ENCODE measurements at regions of chr15 and their contacts with region 1.

Region 1: GRCh38 chr15:81265944-81266775 is 57.8 kb downstream of the STARD5 start:
- DNase-seq: peak; percentile 82 to 90
- ATAC-seq: peak; percentile 92 to 98
- H3K4me3 ChIP-seq: no peak overlapping the region
- H3K27ac ChIP-seq: no peak overlapping the region
- H3K4me1 ChIP-seq: peaks cover 4% of the 10 kb centered on the region; the same call in 2 of the 3 replicates
- CTCF ChIP-seq: peak; percentile 79
- EP300 ChIP-seq: no peak
- POLR2A ChIP-seq: no peak
- RAD21 ChIP-seq: peak; percentile 87 to 96

Region 2: DNA sequence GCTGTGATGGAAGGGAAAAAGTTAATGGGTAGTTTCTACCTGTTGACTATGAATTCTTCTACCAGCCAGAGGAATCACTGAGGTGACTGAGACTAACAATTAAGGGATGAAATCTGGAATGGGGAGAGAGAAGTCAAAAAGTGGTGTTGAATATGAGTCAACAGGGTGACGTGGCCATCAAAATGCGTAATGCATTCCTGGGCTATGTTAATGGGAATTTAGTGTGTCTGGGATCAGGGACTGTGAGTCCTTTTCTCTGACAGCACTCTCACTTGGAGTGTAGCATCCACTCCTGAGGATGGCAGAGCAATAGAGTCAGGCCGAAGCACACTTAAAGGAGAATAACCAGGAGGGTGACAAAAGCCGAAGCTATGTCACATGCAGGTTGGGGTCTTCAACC is 336.9 kb before region 1 on chr15:
- CTCF ChIA-PET with region 1: no interaction called
- POLR2A ChIA-PET with region 1: no interaction called
- DNase-seq: no peak
- ATAC-seq: no peak; a peak in 1 of 6 replicates
- H3K4me3 ChIP-seq: no peak overlapping the region
- H3K27ac ChIP-seq: no peak overlapping the region
- H3K4me1 ChIP-seq: no peaks in the 10 kb centered on the region
- CTCF ChIP-seq: no peak
- EP300 ChIP-seq: no peak
- POLR2A ChIP-seq: no peak
- RAD21 ChIP-seq: no peak

Region 3: GRCh38 chr15:81091889-81092558 is 174.1 kb before region 1 on chr15:
- CTCF ChIA-PET with region 1: interaction called, 13 read pairs
- POLR2A ChIA-PET with region 1: no interaction called
- DNase-seq: peak in 1 of 2 experiments; percentile 34
- ATAC-seq: peak; percentile 60 to 64
- H3K4me3 ChIP-seq: no peak overlapping the region
- H3K27ac ChIP-seq: no peak overlapping the region
- H3K4me1 ChIP-seq: no peaks in the 10 kb centered on the region; the same call in 2 of the 3 replicates
- CTCF ChIP-seq: no peak
- EP300 ChIP-seq: no peak
- POLR2A ChIP-seq: no peak
- RAD21 ChIP-seq: no peak

Region 4: DNA sequence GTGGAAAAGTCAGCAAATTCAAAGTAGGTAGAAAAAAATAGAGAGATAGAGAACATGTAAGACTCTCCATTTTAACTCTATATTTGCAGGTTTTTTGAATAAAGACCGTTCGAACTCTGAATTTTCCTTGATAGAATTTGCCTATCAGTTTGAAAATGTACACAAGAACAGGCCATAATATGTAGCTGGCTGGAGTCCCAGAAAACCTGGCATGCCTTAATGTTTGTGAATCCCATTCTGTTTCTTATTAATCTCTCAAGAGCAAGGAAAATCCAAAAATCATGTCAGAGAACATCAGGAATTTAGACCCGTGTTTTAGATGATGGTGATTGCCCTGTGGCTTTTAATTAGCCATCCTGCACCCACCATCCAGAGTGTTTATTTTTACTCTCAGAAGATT is 139.3 kb before region 1 on chr15:
- CTCF ChIA-PET with region 1: interaction called, 17 read pairs
- POLR2A ChIA-PET with region 1: no interaction called
- DNase-seq: no peak
- ATAC-seq: no peak
- H3K4me3 ChIP-seq: no peak overlapping the region
- H3K27ac ChIP-seq: no peak overlapping the region
- H3K4me1 ChIP-seq: no peaks in the 10 kb centered on the region
- CTCF ChIP-seq: no peak
- EP300 ChIP-seq: no peak
- POLR2A ChIP-seq: no peak
- RAD21 ChIP-seq: no peak

Region 5: DNA sequence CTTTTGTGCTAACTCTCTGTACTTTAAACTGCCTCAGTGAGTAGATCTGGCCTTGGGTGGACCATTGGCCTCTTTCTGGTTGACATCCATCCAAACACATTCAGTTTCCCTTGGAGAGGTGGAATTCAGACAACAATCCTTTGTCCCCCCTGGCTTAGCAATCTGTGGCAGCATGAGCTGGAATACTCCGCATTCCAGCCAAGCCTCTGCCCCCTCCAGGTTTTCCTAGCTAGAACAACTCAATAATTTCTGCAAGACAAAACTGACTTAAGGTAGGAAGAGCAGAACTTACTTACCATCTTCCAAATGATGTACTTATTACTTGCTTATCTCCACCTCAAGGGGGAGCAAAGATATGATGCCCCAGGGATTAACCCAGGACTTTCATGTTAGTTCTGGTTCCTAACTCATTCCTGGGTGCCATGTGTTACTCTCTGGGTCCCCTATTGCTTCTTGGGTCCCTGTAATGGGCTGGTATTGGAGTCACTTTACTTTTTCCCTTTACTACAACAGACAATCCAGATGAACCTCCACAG is 91.3 kb before region 1 on chr15:
- CTCF ChIA-PET with region 1: interaction called, 26 read pairs
- POLR2A ChIA-PET with region 1: no interaction called
- DNase-seq: no peak
- ATAC-seq: no peak
- H3K4me3 ChIP-seq: no peak overlapping the region
- H3K27ac ChIP-seq: no peak overlapping the region
- H3K4me1 ChIP-seq: no peaks in the 10 kb centered on the region
- CTCF ChIP-seq: no peak
- EP300 ChIP-seq: no peak
- POLR2A ChIP-seq: no peak
- RAD21 ChIP-seq: no peak

Region 6: GRCh38 chr15:81244306-81244705 is 21.9 kb before region 1 on chr15:
- CTCF ChIA-PET with region 1: interaction called, 20 read pairs
- POLR2A ChIA-PET with region 1: no interaction called
- DNase-seq: no peak
- ATAC-seq: no peak
- H3K4me3 ChIP-seq: no peak overlapping the region
- H3K27ac ChIP-seq: no peak overlapping the region
- H3K4me1 ChIP-seq: no peaks in the 10 kb centered on the region
- CTCF ChIP-seq: no peak
- EP300 ChIP-seq: no peak
- POLR2A ChIP-seq: no peak
- RAD21 ChIP-seq: no peak

Region 7: GRCh38 chr15:81308260-81308659 is 42.1 kb after region 1 on chr15:
- CTCF ChIA-PET with region 1: interaction called, 15 read pairs
- POLR2A ChIA-PET with region 1: no interaction called
- DNase-seq: no peak
- ATAC-seq: no peak
- H3K4me3 ChIP-seq: no peak overlapping the region
- H3K27ac ChIP-seq: no peak overlapping the region
- H3K4me1 ChIP-seq: peaks cover 11% of the 10 kb centered on the region
- CTCF ChIP-seq: no peak
- EP300 ChIP-seq: no peak
- POLR2A ChIP-seq: no peak
- RAD21 ChIP-seq: no peak

Region 8: GRCh38 chr15:81394603-81395002 is 128.4 kb after region 1 on chr15:
- CTCF ChIA-PET with region 1: interaction called, 361 read pairs
- POLR2A ChIA-PET with region 1: no interaction called
- DNase-seq: no peak
- ATAC-seq: no peak
- H3K4me3 ChIP-seq: no peak overlapping the region
- H3K27ac ChIP-seq: no peak overlapping the region
- H3K4me1 ChIP-seq: no peaks in the 10 kb centered on the region
- CTCF ChIP-seq: no peak
- EP300 ChIP-seq: no peak
- POLR2A ChIP-seq: no peak
- RAD21 ChIP-seq: no peak

Measured in A549 (cell line).